Activated CD8-positive, alpha-beta T cell treated with anti-CD3 and anti-CD28 coated beads, Interleukin-2, amount 10 ng/mL, durations not matched to agents 7 days and 5 days (primary cell): ENCODE measurements at regions of chr9 and their contacts with region 1.

Region 1: GRCh38 chr9:113401027-113401792 is at the start of gene ALAD:
- DNase-seq: peak; percentile 99
- ATAC-seq: peak; percentile 100
- H3K4me3 Mint-ChIP-seq: peak within 1 kb of the TSS; percentile 89
- H3K27ac Mint-ChIP-seq: peak within 1 kb of the TSS; percentile 81
- H3K4me1 Mint-ChIP-seq: peaks cover 17% of the 10 kb centered on the region
- H3K27me3 Mint-ChIP-seq: no peaks in the 10 kb centered on the region
- total RNA-seq, gene ALAD: 26.0 to 30.7 TPM

Region 2: DNA sequence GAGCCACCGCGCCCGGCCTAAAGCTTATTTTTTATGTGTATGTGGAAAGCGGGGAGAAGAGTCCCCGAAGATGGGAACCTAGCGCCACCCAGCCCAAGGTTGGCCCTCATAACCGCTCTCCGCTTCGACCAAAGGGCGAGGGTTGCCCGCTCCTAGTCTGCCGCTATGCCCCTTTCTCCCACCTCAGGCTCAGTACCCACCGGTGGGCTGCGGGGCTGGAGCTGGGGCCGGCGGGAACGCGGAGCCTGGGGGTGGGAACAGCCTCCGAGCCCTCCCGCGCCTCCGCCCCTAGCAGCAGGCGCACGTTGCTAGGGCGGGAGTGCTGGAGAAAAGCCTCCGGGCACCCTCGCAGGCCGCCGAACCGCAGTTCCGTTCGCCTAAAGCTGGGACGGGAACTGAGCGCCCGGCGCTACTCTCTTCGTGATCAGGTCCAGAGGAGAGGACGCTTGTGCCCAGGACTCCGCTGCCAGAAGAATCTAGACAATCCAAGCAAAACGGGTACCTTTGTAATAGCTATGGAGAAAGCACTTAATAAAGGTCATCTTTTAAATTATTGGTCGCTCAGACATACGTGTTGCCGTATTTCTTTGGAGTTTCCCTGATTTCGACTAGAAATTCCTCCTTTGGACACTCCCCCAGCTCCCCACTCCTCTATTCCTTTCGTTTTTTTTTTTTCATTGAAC is 61.1 kb before region 1 on chr9 and contains the start of gene WDR31:
- CTCF ChIA-PET with region 1: interaction called, 10 read pairs
- POLR2A ChIA-PET with region 1: no interaction called
- DNase-seq: peak; percentile 82
- ATAC-seq: peak; percentile 99
- H3K4me3 Mint-ChIP-seq: peak within 1 kb of the TSS; percentile 83
- H3K27ac Mint-ChIP-seq: peak within 1 kb of the TSS; percentile 50
- H3K4me1 Mint-ChIP-seq: peaks cover 37% of the 10 kb centered on the region
- H3K27me3 Mint-ChIP-seq: peaks cover 2% of the 10 kb centered on the region
- total RNA-seq, gene WDR31: 0.47 to 0.92 TPM

Region 3: DNA sequence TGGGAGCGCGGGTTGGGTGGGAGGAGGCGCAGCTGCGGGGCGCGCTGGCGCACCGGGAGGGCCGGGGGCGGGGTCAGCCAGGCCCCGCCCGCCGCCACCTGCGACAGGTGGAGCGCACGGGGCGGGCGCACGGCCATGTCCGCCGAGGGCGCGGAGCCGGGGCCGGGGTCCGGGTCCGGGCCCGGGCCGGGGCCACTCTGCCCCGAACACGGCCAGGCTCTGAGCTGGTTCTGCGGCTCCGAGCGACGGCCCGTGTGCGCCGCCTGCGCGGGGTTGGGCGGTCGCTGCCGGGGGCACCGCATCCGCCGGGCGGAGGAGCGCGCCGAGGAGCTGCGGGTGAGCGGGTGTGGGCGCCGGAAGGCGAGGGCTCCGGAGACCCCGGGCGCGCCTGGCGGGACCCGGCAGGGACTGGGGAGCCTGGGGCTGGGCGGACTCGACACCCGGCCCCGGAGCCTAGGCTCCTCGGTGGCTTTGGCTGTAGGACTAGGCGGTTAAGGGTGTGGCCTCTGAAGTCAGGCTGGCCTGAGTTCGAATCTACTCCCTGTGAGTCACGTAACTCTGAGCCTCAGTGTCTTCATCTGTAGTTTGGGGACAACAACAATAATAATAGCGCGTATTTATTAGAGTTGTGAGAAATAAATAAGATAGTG is 51.6 kb before region 1 on chr9 and contains the start of gene BSPRY:
- CTCF ChIA-PET with region 1: interaction called, 15 read pairs
- POLR2A ChIA-PET with region 1: interaction called, 8 read pairs
- DNase-seq: peak; percentile 58
- ATAC-seq: peak; percentile 71
- H3K4me3 Mint-ChIP-seq: peak within 1 kb of the TSS; percentile 78
- H3K27ac Mint-ChIP-seq: peak within 1 kb of the TSS; percentile 63
- H3K4me1 Mint-ChIP-seq: peaks cover 30% of the 10 kb centered on the region
- H3K27me3 Mint-ChIP-seq: no peaks in the 10 kb centered on the region
- total RNA-seq, gene BSPRY: 4.0 to 4.4 TPM

Region 4: DNA sequence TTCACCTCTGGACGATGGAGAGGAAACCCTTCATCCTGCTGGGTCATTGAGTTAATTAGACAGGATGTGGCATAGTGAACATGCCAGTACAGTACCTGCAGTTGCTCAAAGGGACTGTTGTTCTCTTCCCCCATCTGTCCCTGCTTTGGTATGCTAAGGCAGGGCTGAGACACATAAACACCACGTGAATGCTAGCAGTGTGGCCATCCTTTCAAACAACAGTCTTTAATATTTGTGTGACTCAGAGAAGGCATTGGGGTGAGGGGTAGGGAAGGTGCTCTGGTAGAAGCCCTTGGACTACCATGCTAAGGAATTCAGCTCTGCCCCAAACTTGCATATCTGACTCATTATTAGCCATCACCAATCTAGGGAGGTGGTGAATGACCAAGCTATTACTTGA is 294.7 kb after region 1 on chr9:
- CTCF ChIA-PET with region 1: no interaction called
- POLR2A ChIA-PET with region 1: no interaction called
- DNase-seq: peak; percentile 26
- ATAC-seq: peak; percentile 75
- H3K4me3 Mint-ChIP-seq: no peak overlapping the region
- H3K27ac Mint-ChIP-seq: no peak overlapping the region
- H3K4me1 Mint-ChIP-seq: peaks cover 17% of the 10 kb centered on the region
- H3K27me3 Mint-ChIP-seq: peaks cover 20% of the 10 kb centered on the region